Pancreas (tissue), 10 donors: ENCODE measurements at regions of chr1 and their contacts with region 1.

Region 1: DNA sequence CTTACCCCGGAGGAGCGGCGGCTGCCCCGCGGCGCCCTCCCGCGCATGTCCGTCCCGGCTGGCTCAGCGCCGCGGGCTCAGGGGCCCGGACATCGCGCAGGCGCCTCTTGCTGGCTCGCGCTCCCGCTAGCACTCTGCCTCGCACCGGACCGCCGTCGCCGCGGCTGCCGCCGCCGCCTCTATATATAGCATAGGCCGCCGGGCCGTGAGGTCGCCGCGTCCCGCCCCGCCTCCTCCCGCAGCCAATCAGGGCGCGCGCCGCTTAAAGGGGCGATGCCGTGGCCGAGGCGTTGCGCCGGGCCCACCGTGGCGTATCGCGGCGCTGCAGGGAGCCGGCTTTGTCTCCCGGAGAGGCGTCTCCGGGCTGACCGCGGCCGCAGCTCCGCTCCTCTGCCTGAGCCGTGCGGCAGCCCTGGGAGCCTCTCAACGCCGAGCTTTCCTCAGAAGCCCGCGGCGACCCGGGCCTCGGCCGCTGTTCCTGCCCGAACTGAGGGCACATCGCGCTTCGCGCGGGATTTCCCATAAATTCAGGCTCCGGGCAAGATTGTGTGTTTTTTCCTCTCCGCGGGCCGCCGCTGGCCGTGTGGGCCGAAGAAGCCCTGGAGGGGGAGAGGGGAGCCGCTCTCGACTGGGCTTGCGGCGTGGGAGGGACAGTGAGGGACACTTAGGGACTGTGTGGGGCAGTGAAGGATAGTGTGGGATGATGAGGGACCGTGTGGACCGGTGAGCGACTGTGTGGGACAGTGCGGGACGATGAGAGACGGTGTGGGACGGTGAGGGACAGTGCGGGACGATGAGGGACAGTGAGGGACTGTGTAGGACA is at the start of gene ERRFI1:
- DNase-seq: peak; percentile 92 to 100 (median 98)
- ATAC-seq: peak; percentile 70 to 85 (median 74)
- H3K4me3 ChIP-seq: peak within 1 kb of the TSS; percentile 69 to 92 (median 82)
- H3K27ac ChIP-seq: peak within 1 kb of the TSS; percentile 98 to 100 (median 99)
- H3K4me1 ChIP-seq: peaks cover 17 to 35% (median 23%) of the 10 kb centered on the region in 3 donors
- H3K27me3 ChIP-seq: no peaks in the 10 kb centered on the region
- CTCF ChIP-seq: no peak
- total RNA-seq, gene ERRFI1: 36.4 to 392 (median 81.7) TPM

Region 2: GRCh38 chr1:7491109-7491817 is 535.1 kb before region 1 on chr1:
- intact Hi-C with region 1: no loop called
- DNase-seq: peak in 1 of 6 donors; percentile 24
- ATAC-seq: peak; percentile 39 to 74 (median 56)
- H3K4me3 ChIP-seq: no peak overlapping the region
- H3K27ac ChIP-seq: peak overlapping the region in 1 of 4 donors; percentile 28
- H3K4me1 ChIP-seq: no peaks in the 10 kb centered on the region
- H3K27me3 ChIP-seq: no peaks in the 10 kb centered on the region
- CTCF ChIP-seq: no peak

Region 3: GRCh38 chr1:7893529-7894180 is 132.7 kb before region 1 on chr1:
- intact Hi-C with region 1: no loop called
- DNase-seq: no peak
- ATAC-seq: no peak
- H3K4me3 ChIP-seq: no peak overlapping the region
- H3K27ac ChIP-seq: no peak overlapping the region
- H3K4me1 ChIP-seq: no peaks in the 10 kb centered on the region
- H3K27me3 ChIP-seq: no peaks in the 10 kb centered on the region
- CTCF ChIP-seq: no peak

Region 4: DNA sequence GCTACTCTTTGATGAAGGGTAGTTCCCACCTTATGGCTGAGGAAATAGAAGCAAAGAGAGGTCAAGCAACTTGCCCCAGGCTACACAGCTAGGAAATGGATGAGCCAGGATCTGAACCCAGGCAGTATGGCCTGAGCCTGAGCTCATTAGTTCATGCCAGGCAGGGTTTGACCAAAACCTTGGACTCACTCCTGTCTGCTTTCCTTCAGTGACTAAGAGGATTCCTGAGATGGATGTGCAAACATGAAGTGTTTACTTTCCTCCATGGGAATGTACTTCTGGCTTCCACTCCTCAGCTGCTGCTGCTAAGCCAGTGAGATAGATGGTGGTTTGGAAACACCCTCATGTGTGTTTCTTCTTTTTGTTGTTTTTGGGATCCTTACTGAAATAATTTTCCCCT is 34.8 kb after region 1 on chr1:
- intact Hi-C with region 1: no loop called
- DNase-seq: peak in 3 of 6 donors; percentile 50 to 66 (median 56)
- ATAC-seq: peak; percentile 90 to 96 (median 94)
- H3K4me3 ChIP-seq: no peak overlapping the region
- H3K27ac ChIP-seq: peak overlapping the region in 2 of 4 donors; percentile 51 to 55
- H3K4me1 ChIP-seq: peaks cover 10 to 17% (median 12%) of the 10 kb centered on the region in 3 donors
- H3K27me3 ChIP-seq: no peaks in the 10 kb centered on the region
- CTCF ChIP-seq: no peak

Region 5: DNA sequence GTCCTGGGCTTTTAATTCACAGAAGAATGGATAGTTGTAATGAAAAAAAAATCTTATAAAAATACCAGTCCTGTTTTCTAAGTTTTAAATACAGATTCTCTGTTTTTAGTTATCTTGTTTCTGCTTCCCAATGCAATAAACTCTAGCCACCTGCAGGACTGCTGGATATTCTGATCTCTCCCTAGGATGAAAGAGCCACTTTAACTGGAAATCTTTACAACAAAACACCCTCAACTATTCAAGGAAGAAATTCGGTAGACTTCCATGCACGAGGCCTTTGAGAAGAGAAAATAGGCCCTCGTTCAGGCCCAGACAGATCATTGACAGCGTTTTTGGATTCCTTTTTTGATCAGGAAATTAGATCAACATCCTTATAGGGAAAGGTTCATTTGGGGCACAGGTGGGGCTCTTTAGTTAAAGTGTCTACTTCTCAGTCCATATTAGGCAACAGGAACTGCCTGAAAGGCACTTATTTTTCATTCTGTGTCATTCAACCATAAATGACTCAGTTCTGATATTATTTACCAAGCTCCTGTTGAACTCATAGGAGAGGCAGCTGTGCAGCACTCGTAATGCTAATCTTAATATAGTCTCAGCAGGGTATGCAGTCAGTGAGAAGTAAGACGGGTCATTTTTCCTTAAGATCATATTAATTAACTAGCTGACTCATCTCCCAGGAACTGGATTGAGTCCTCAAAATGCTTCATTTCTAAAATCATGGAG is 70.9 kb after region 1 on chr1:
- intact Hi-C with region 1: no loop called
- DNase-seq: peak in 1 of 6 donors; percentile 32
- ATAC-seq: peak; percentile 74 to 88 (median 78)
- H3K4me3 ChIP-seq: no peak overlapping the region
- H3K27ac ChIP-seq: peak overlapping the region; percentile 4 to 85 (median 60)
- H3K4me1 ChIP-seq: peaks cover 27 to 39% (median 35%) of the 10 kb centered on the region in 3 donors
- H3K27me3 ChIP-seq: no peaks in the 10 kb centered on the region
- CTCF ChIP-seq: no peak

Region 6: GRCh38 chr1:8169364-8170058 is 143.1 kb after region 1 on chr1:
- intact Hi-C with region 1: loop called in 1 of 3 experiments (anchors 10 kb)
- DNase-seq: peak in 4 of 6 donors; percentile 52 to 79 (median 72)
- ATAC-seq: peak; percentile 82 to 92 (median 88)
- H3K4me3 ChIP-seq: no peak overlapping the region
- H3K27ac ChIP-seq: peak overlapping the region; percentile 63 to 92 (median 84)
- H3K4me1 ChIP-seq: peaks cover 23% of the 10 kb centered on the region in 3 donors
- H3K27me3 ChIP-seq: no peaks in the 10 kb centered on the region
- CTCF ChIP-seq: no peak

Region 7: GRCh38 chr1:8238851-8239305 is 212.5 kb after region 1 on chr1:
- intact Hi-C with region 1: loop called in 1 of 3 experiments (anchors 5 kb)
- DNase-seq: peak in 4 of 6 donors; percentile 37 to 43 (median 41)
- ATAC-seq: peak; percentile 67 to 87 (median 86)
- H3K4me3 ChIP-seq: no peak overlapping the region
- H3K27ac ChIP-seq: peak overlapping the region in 2 of 4 donors; percentile 27 to 33
- H3K4me1 ChIP-seq: peaks cover 0 to 10% (median 0%) of the 10 kb centered on the region in 3 donors
- H3K27me3 ChIP-seq: no peaks in the 10 kb centered on the region
- CTCF ChIP-seq: peak in 1 of 4 donors; percentile 9

Region 8: GRCh38 chr1:8314346-8315280 is 288.2 kb after region 1 on chr1:
- intact Hi-C with region 1: loop called in 2 of 3 experiments (anchors 2 to 5 kb)
- DNase-seq: peak; percentile 76 to 89 (median 82)
- ATAC-seq: peak; percentile 65 to 90 (median 82)
- H3K4me3 ChIP-seq: no peak overlapping the region
- H3K27ac ChIP-seq: peak overlapping the region in 2 of 4 donors; percentile 12 to 66
- H3K4me1 ChIP-seq: peaks cover 12 to 29% (median 16%) of the 10 kb centered on the region in 3 donors
- H3K27me3 ChIP-seq: no peaks in the 10 kb centered on the region
- CTCF ChIP-seq: peak; percentile 77 to 85 (median 80)